GM12878 (cell line): ENCODE measurements at regions of chr4 and their contacts with region 1.

Region 1: GRCh38 chr4:123396307-123397143 is at the start of gene SPRY1:
- DNase-seq: peak; percentile 66
- ATAC-seq: peak; percentile 49
- H3K4me3 ChIP-seq: peak within 1 kb of the TSS; percentile 63
- H3K27ac ChIP-seq: no peak within 1 kb of the TSS
- H3K4me1 ChIP-seq: peaks cover 7% of the 10 kb centered on the region; the same call in 1 of the 2 replicates
- H3K27me3 ChIP-seq: peaks cover 6 to 11% of the 10 kb centered on the region in 2 experiments; a peak in 3 of 4 replicates
- CTCF ChIP-seq: no peak
- EP300 ChIP-seq: no peak
- POLR2A ChIP-seq: no peak
- RAD21 ChIP-seq: no peak
- polyA plus RNA-seq, gene SPRY1: 0.05 TPM in 1 of 2 experiments, not detected in the other

Region 2: DNA sequence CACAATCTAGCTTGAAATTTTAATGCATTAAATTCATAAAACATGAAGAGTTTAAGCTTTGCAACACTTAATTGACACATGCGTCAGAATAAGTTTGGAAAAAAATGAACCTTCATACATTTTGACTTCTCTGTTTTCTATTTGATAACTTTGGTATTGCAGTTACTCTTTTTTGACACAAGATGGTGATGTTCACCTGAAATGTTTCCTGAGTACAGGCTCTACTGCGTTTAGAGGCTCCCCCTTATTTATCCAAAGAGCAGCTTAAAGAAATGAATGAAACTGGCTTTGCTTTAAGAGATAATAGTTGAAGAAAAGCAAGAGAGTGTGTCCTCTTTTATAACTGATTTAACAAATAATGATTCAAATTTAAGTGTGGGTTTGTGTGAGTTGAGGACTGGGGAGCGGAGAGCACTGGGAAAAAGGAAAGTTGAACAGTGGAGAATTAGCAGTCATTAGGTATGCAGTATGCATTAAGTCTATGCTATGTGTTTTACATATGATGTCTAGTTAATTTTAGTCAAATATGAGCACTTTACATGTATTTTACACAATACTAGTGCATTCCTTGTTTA is 293.5 kb before region 1 on chr4:
- CTCF ChIA-PET with region 1: interaction called, 31 read pairs
- POLR2A ChIA-PET with region 1: no interaction called
- RAD21 ChIA-PET with region 1: interaction called, 3 read pairs
- SMC1A ChIA-PET with region 1: interaction called, 5 read pairs
- in situ Hi-C with region 1: no loop called
- intact Hi-C with region 1: loop called (anchors 5 kb)
- DNase-seq: no peak
- ATAC-seq: peak; percentile 82
- H3K4me3 ChIP-seq: no peak overlapping the region
- H3K27ac ChIP-seq: no peak overlapping the region
- H3K4me1 ChIP-seq: no peaks in the 10 kb centered on the region
- H3K27me3 ChIP-seq: no peaks in the 10 kb centered on the region
- CTCF ChIP-seq: peak; percentile 58 to 71 (median 68); a peak in 5 of 6 replicates
- EP300 ChIP-seq: no peak
- POLR2A ChIP-seq: no peak
- RAD21 ChIP-seq: peak; percentile 82

Region 3: DNA sequence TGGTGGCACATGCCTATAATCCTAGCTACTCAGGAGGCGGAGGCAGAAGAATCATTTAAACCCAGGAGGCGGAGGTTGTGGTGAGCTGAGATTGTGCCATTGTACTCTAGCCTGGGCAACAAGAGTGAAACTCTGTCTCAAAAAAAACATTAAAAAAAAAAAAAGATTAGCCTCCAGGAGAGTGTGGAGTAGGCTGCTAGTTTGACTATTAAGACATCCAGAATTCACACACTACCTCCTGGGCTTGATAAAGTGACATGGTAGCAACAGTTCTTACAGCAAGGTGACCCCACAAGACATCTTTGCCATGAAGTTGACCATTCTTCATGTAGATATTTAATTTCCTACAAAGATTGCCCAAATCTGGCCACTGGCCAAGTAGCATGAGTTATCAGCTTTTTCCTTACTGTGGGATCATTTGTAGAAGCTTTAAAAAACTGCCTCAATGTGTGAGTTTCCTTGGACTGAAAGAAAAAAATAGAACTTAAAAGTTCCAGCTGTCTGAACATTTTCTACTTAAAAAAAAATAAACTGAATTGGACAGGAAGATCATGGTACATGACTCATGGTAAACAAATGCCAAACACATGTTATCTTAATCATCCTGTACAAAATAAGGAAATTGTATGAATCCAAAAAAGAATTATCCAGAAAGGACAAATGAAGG is 35.2 kb before region 1 on chr4:
- CTCF ChIA-PET with region 1: no interaction called
- POLR2A ChIA-PET with region 1: no interaction called
- RAD21 ChIA-PET with region 1: no interaction called
- SMC1A ChIA-PET with region 1: no interaction called
- in situ Hi-C with region 1: no loop called
- intact Hi-C with region 1: no loop called
- DNase-seq: no peak
- ATAC-seq: no peak
- H3K4me3 ChIP-seq: no peak overlapping the region
- H3K27ac ChIP-seq: no peak overlapping the region
- H3K4me1 ChIP-seq: peaks cover 5% of the 10 kb centered on the region
- H3K27me3 ChIP-seq: no peaks in the 10 kb centered on the region
- CTCF ChIP-seq: no peak
- EP300 ChIP-seq: no peak
- POLR2A ChIP-seq: no peak
- RAD21 ChIP-seq: no peak

Region 4: DNA sequence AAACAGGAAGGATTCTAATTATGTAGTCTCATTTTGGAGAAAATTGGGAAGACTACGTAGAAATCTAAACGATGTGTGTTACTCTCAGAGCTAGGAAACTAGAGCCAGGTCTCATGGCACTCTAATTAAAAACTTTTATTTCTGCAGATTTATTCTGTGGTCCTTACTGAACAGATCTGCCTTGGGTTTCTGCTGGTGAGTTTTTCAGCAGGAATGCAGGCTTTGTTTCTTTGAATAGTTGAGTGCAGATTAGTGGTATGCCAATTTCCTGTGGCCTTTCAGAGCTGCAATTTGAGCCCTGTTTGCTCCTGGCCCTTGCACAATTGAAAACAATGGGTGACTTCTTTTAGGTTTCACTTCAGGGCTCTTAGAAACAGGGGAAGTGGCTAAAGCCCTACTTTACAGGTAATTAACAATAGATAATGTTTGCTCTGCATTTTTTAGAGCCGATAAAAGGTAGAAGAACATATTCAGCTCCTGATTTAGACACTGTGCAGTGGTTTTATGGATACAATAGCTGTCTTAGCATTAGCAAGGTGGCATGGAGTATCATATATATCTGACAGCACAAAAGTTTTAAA is 21.9 kb after region 1 on chr4:
- CTCF ChIA-PET with region 1: interaction called, 67 read pairs
- POLR2A ChIA-PET with region 1: interaction called, 6 read pairs
- RAD21 ChIA-PET with region 1: interaction called, 66 read pairs
- SMC1A ChIA-PET with region 1: interaction called, 45 read pairs
- in situ Hi-C with region 1: no loop called
- intact Hi-C with region 1: no loop called
- DNase-seq: no peak
- ATAC-seq: peak; percentile 93
- H3K4me3 ChIP-seq: no peak overlapping the region
- H3K27ac ChIP-seq: no peak overlapping the region
- H3K4me1 ChIP-seq: peaks cover 9% of the 10 kb centered on the region; the same call in 1 of the 2 replicates
- H3K27me3 ChIP-seq: no peaks in the 10 kb centered on the region
- CTCF ChIP-seq: no peak
- EP300 ChIP-seq: no peak; a peak in 1 of 4 replicates
- POLR2A ChIP-seq: no peak
- RAD21 ChIP-seq: no peak

Region 5: DNA sequence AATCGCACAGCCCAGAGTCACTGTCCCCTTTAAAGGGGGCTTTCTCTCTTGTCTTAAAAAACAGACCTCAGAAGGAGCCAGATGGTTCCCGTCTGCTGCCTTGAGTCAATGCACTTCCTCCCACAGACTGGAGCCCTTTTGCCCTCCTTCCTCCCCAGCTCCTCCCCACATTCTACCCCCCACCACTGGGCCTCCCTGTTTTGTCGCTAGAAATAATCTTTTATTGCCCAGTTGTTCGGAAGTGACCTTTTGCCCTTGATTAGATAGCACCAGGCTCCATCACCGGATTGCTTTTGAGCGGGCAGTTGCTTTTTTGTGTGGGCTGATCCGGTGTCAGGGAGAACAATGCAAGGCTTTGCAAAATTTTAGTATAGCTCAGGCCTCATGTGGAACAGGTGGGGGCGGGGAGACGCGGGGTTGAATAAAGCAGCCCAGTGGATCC is 47.8 kb after region 1 on chr4:
- CTCF ChIA-PET with region 1: interaction called, 7 read pairs
- POLR2A ChIA-PET with region 1: no interaction called
- RAD21 ChIA-PET with region 1: interaction called, 5 read pairs
- SMC1A ChIA-PET with region 1: interaction called, 7 read pairs
- in situ Hi-C with region 1: no loop called
- intact Hi-C with region 1: loop called (anchors 2 kb)
- DNase-seq: peak; percentile 45
- ATAC-seq: peak; percentile 93
- H3K4me3 ChIP-seq: peak overlapping the region; percentile 29; the same call in 1 of the 2 replicates
- H3K27ac ChIP-seq: peak overlapping the region; percentile 43; the same call in 1 of the 2 replicates
- H3K4me1 ChIP-seq: peaks cover 7% of the 10 kb centered on the region
- H3K27me3 ChIP-seq: no peaks in the 10 kb centered on the region
- CTCF ChIP-seq: no peak
- EP300 ChIP-seq: no peak
- POLR2A ChIP-seq: no peak
- RAD21 ChIP-seq: no peak

Region 6: GRCh38 chr4:123649645-123650391 is 253.3 kb after region 1 on chr4:
- CTCF ChIA-PET with region 1: interaction called, 17 read pairs
- POLR2A ChIA-PET with region 1: no interaction called
- RAD21 ChIA-PET with region 1: interaction called, 23 read pairs
- SMC1A ChIA-PET with region 1: interaction called, 20 read pairs
- in situ Hi-C with region 1: loop called (anchors 5 kb)
- intact Hi-C with region 1: no loop called
- DNase-seq: no peak
- ATAC-seq: peak; percentile 72
- H3K4me3 ChIP-seq: no peak overlapping the region
- H3K27ac ChIP-seq: no peak overlapping the region
- H3K4me1 ChIP-seq: no peaks in the 10 kb centered on the region; the same call in 1 of the 2 replicates
- H3K27me3 ChIP-seq: no peaks in the 10 kb centered on the region
- CTCF ChIP-seq: no peak
- EP300 ChIP-seq: no peak
- POLR2A ChIP-seq: no peak
- RAD21 ChIP-seq: no peak

Region 7: GRCh38 chr4:123776254-123776653 is 379.7 kb after region 1 on chr4:
- CTCF ChIA-PET with region 1: no interaction called
- POLR2A ChIA-PET with region 1: no interaction called
- RAD21 ChIA-PET with region 1: no interaction called
- SMC1A ChIA-PET with region 1: no interaction called
- in situ Hi-C with region 1: no loop called
- intact Hi-C with region 1: loop called (anchors 10 kb)
- DNase-seq: peak; percentile 25
- ATAC-seq: peak; percentile 97
- H3K4me3 ChIP-seq: no peak overlapping the region
- H3K27ac ChIP-seq: no peak overlapping the region
- H3K4me1 ChIP-seq: peaks cover 3% of the 10 kb centered on the region; the same call in 1 of the 2 replicates
- H3K27me3 ChIP-seq: no peaks in the 10 kb centered on the region
- CTCF ChIP-seq: no peak
- EP300 ChIP-seq: peak in 1 of 2 experiments; percentile 74; a peak in 1 of 4 replicates
- POLR2A ChIP-seq: no peak
- RAD21 ChIP-seq: no peak